Heart left ventricle (tissue), 16 donors: ENCODE measurements at regions of chr11 and their contacts with region 1.

Region 1: GRCh38 chr11:98289617-98290263 is 731.0 kb upstream of the CNTN5 start:
- DNase-seq: no peak
- ATAC-seq: no peak
- H3K4me3 ChIP-seq: no peak overlapping the region
- H3K27ac ChIP-seq: no peak overlapping the region
- H3K4me1 ChIP-seq: no peaks in the 10 kb centered on the region
- H3K27me3 ChIP-seq: no peaks in the 10 kb centered on the region
- CTCF ChIP-seq: no peak
- POLR2A ChIP-seq: no peak

Region 2: GRCh38 chr11:98300777-98301176 is 11.0 kb after region 1 on chr11:
- intact Hi-C with region 1: loop called in 1 of 10 experiments (anchors 1 kb)
- DNase-seq: no peak
- ATAC-seq: no peak
- H3K4me3 ChIP-seq: no peak overlapping the region
- H3K27ac ChIP-seq: no peak overlapping the region
- H3K4me1 ChIP-seq: no peaks in the 10 kb centered on the region
- H3K27me3 ChIP-seq: no peaks in the 10 kb centered on the region
- CTCF ChIP-seq: no peak
- POLR2A ChIP-seq: no peak